ENCODE measurements at regions of chr16 and their contacts with region 1.

Region 1: DNA sequence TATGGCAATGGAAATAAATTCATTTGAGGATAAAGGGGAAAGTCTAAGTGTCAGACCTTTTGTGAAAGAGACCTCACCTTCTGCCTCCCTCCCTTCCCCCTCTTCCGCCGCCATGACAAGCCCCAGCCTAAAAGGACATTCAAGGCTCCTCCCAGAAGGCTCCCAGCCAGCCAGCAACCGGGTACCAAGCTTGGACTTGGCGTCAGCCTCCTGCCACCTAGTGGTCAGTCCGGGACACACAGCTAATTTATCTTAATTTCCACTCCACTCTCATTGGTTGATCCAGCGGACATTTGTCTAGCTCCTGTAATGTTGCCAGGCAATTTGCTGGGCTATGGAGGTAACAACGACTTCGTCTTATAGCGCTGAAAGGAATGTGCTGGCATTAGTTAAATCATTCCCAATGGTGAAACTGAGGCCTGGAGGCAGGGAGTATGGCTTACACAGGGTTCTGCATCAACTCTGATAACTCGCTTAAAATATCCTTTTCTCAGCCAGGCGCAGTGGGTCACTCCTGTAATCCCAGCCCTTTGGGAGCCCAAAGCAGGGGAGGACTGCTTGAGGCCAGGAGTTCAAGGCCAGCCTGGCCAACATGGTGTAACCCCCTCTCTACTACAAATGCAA is 19.3 kb upstream of the CLEC3A start:
- DNase-seq: peak; percentile 79
- H3K27ac ChIP-seq: no peak overlapping the region
- CTCF ChIP-seq: peak; percentile 74

Region 2: DNA sequence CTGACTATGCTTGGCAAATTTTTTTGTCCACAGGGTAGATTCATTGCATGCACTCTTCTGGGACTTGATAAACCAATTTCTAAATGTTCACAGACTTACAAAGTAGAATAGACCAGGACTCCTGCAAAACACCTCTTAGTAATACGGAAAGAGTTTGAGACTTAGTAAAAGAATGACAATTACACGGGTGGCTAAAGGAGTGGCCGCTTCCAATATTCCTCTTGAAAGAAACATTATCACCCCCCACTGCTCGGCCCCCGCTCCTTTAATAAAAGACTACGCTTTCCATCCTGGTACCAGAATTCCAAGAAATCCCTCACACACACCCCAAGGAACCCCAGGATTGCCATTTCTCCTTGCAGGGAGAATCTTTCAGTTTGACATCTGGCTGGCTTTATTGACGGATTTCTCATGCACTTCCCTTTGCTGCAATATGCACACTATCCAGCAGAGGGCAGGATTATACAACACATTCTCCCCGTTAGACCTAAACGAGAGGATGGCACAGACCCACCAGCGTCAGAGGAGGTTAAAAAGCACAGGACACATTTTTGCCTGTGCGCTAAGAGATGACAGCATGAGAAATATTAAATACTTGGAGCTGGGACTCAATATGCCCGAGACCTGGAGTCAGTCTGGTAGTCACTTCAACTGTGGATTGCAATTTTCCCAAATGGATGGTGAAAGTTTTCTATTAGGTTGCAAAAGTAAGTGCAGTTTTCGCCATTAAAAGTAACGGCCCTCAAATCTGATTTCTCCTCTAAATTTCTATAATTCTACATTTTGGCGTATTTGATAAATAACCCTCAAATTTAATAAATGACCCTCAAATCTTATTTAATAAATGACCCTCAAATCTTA is 327.3 kb before region 1 on chr16:
- CTCF ChIA-PET with region 1: interaction called, 16 read pairs
- POLR2A ChIA-PET with region 1: no interaction called
- DNase-seq: peak; percentile 64
- H3K27ac ChIP-seq: no peak overlapping the region
- CTCF ChIP-seq: peak; percentile 84

Measured in RWPE1 (cell line).